Activated CD4-positive, alpha-beta T cell treated with anti-CD3 and anti-CD28 coated beads for 36 hours (primary cell): ENCODE measurements at regions of chr5 and their contacts with region 1.

Region 1: GRCh38 chr5:87121304-87122150 is 146.2 kb upstream of the RASA1 start:
- DNase-seq: peak; percentile 51
- ATAC-seq: peak; percentile 76
- H3K4me3 Mint-ChIP-seq: peak overlapping the region; percentile 26
- H3K27ac Mint-ChIP-seq: peak overlapping the region; percentile 44
- H3K4me1 Mint-ChIP-seq: peaks cover 57% of the 10 kb centered on the region
- H3K27me3 Mint-ChIP-seq: peaks cover 2% of the 10 kb centered on the region

Region 2: DNA sequence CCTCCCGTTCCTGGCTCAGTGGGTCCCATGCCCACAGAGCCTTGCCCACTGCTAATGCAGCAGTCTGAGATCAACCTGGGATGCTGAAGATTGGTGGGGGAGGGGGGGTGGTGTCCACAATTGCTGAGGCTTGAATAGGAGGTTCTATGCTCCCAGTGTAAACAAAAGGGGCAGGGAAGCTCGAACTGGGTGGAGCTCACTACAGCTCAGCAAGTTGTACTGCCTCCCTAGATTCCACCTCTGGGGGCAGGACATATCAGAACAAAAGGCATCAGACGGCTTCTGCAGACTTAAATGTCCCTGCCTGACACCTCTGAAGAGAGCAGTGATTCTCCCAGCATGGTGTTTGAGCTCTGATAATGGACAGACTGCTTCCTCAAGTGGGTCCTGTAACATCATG is 1389.3 kb before region 1 on chr5:
- CTCF ChIA-PET with region 1: no interaction called
- POLR2A ChIA-PET with region 1: no interaction called
- intact Hi-C with region 1: no loop called
- DNase-seq: no peak
- ATAC-seq: no peak
- H3K4me3 Mint-ChIP-seq: no peak overlapping the region
- H3K27ac Mint-ChIP-seq: no peak overlapping the region
- H3K4me1 Mint-ChIP-seq: no peaks in the 10 kb centered on the region
- H3K27me3 Mint-ChIP-seq: no peaks in the 10 kb centered on the region

Region 3: GRCh38 chr5:86917117-86917579 is 204.4 kb before region 1 on chr5:
- CTCF ChIA-PET with region 1: no interaction called
- POLR2A ChIA-PET with region 1: no interaction called
- intact Hi-C with region 1: loop called in 1 of 2 experiments (anchors 5 kb)
- DNase-seq: peak; percentile 13
- ATAC-seq: peak; percentile 70
- H3K4me3 Mint-ChIP-seq: no peak overlapping the region
- H3K27ac Mint-ChIP-seq: no peak overlapping the region
- H3K4me1 Mint-ChIP-seq: peaks cover 4% of the 10 kb centered on the region
- H3K27me3 Mint-ChIP-seq: peaks cover 7% of the 10 kb centered on the region

Region 4: DNA sequence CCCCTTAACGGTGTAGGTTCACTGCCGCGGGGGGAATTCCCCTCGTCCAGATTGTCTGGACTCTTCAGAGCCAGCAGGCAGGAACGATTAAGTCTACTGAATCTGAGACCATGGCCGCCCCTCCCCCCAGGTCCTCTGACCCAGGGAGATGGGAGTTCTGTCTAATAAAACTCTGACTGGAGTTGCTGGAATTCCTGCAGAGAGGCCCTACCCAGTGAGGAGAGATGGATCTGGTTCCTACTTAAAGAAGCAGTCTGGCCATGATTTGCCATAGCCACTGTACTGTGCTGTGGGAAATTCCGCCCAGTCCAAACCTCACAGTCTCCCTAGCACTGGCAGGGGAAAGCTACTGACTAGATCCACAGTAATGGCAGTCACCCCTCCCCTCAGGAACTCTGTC is 91.6 kb before region 1 on chr5:
- CTCF ChIA-PET with region 1: interaction called, 3 read pairs
- POLR2A ChIA-PET with region 1: no interaction called
- intact Hi-C with region 1: loop called in 1 of 2 experiments (anchors 5 kb)
- DNase-seq: no peak
- ATAC-seq: no peak
- H3K4me3 Mint-ChIP-seq: no peak overlapping the region
- H3K27ac Mint-ChIP-seq: no peak overlapping the region
- H3K4me1 Mint-ChIP-seq: peaks cover 25% of the 10 kb centered on the region
- H3K27me3 Mint-ChIP-seq: no peaks in the 10 kb centered on the region

Region 5: GRCh38 chr5:87267574-87268125 is 146.1 kb after region 1 on chr5 and contains the start of gene RASA1:
- CTCF ChIA-PET with region 1: interaction called, 3 read pairs
- POLR2A ChIA-PET with region 1: no interaction called
- intact Hi-C with region 1: loop called (anchors 1 kb)
- DNase-seq: peak; percentile 93
- ATAC-seq: peak; percentile 79
- H3K4me3 Mint-ChIP-seq: peak within 1 kb of the TSS; percentile 100
- H3K27ac Mint-ChIP-seq: peak within 1 kb of the TSS; percentile 98
- H3K4me1 Mint-ChIP-seq: peaks cover 34% of the 10 kb centered on the region
- H3K27me3 Mint-ChIP-seq: no peaks in the 10 kb centered on the region
- total RNA-seq, gene RASA1: 22.6 to 22.9 TPM

Region 6: DNA sequence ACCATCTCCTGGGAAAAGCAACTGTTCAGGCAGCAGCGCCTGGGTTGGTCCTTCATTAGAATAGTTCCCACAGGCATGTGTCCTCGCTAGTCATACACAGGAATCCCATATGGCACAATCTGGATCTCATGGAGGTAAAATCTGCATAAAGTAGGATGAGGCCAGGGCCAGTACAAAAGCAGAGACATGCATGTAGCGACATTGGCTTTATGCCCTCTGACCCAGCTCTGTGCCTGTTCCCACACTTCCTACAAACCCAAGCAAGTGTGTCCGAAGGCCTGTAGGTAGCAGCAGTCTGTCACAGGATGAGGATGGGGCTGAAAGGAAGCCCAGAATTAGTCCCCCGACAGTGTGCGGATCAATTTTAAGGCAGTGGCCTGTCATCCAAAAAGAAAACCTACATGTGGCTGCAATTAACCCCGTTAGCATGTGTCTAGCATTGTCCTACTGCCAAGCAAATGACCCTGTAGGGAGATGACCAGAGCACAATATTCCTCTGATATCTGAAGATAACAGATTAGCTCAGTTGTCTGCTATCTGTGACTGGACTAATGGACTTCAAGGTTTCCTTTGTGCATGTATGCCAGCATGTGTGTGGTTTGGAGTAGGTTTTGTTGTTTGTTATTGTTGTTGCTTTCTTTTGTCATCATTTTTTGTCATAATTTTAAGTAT is 968.3 kb after region 1 on chr5:
- CTCF ChIA-PET with region 1: no interaction called
- POLR2A ChIA-PET with region 1: no interaction called
- intact Hi-C with region 1: no loop called
- DNase-seq: no peak
- ATAC-seq: no peak
- H3K4me3 Mint-ChIP-seq: no peak overlapping the region
- H3K27ac Mint-ChIP-seq: no peak overlapping the region
- H3K4me1 Mint-ChIP-seq: no peaks in the 10 kb centered on the region
- H3K27me3 Mint-ChIP-seq: peaks cover 12% of the 10 kb centered on the region

Region 7: DNA sequence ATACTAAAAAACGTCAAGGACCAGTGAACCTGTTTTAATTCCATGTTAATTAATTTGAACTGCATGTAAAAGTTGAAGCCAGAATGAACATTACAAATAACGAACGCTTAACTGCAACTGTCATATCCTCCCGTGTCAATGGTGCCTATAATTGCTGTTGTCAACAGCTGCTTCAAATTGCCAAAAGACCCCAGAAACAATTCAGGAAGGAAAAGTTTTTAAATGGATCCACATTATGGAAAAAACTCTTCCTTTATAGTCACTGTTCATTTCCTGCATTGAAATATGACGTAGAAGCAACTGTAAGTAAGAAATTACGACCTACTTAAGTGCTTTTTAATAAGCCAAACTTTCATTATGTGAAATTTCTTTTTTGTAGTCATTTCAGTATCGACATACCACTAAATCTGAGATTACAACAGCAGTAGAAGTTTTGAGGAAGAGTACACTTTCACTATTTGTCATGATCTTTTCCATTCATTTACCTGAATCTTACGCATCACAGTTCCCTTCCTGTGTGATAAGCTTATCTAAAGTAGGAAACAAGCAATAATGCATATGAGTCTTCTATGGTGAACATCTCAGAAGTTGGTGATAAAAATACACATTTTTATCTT is 1723.7 kb after region 1 on chr5:
- CTCF ChIA-PET with region 1: no interaction called
- POLR2A ChIA-PET with region 1: no interaction called
- intact Hi-C with region 1: loop called in 1 of 2 experiments (anchors 5 kb)
- DNase-seq: no peak
- ATAC-seq: peak; percentile 95
- H3K4me3 Mint-ChIP-seq: no peak overlapping the region
- H3K27ac Mint-ChIP-seq: no peak overlapping the region
- H3K4me1 Mint-ChIP-seq: peaks cover 11% of the 10 kb centered on the region
- H3K27me3 Mint-ChIP-seq: peaks cover 17% of the 10 kb centered on the region